Adrenal gland (tissue), 19 donors: ENCODE measurements at regions of chr20 and their contacts with region 1.

Region 1: DNA sequence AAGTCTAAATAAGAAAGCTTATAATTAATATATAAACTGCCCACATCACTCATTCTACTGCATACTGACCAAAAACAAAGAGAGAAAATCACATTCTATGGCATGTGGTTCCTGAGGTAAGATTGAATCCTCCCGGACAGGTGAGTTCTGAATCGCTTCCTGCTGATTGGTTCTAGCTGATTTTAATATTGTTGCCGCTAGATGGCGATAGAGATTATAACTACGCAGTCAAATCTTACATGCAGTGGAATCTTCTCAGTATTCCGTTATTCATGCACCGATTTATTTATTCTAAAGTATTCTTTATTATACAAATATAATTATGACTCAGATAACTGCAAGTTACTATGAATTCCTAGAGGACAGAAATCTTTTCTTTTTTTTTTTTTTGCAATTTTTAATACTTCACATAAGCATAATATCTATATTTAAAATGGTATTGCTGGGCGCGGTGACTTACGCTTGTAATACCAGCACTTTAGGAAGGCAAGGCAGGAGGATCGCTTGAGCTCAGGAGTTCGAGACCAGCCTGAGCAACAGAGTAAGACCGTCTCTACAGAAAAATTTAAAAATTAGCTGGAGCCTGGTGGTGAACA is 24.2 kb upstream of the TMX4 start:
- DNase-seq: peak in 2 of 7 donors; percentile 25 to 34
- H3K4me3 ChIP-seq: no peak overlapping the region
- H3K27ac ChIP-seq: no peak overlapping the region
- H3K4me1 ChIP-seq: no peaks in the 10 kb centered on the region
- H3K27me3 ChIP-seq: no peaks in the 10 kb centered on the region
- CTCF ChIP-seq: peak; percentile 56 to 85 (median 73)
- POLR2A ChIP-seq: no peak

Region 2: DNA sequence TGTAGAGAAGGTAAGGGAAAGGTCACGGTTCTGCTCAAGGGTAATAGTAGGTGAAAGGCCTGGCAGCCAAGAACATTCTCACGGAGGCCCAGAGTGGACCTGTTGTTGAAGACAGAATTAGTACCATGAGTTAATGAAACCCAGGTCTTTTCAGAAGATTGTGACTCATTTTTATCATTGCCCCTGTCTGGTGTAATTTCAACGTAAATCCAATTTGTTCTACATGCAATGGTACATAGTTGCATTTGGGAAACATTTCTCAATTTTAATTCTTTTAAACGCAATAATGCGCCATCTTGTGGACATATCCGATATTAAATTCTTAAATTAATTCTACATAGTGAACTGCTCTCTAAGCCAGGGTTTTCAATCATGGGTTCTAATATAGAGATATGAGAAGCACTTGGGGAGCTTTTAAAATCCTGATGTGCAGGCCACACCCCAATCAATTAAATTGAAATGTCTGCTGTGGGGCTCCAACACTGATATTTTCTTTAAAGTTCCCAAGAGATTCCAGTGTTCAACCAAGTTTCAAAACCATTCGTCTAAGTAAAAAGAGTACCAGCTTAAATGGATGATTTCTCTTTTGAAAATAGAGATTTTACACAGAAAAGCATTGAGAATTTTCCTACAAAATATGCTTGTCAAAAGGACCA is 345.7 kb after region 1 on chr20:
- intact Hi-C with region 1: loop called in 1 of 2 experiments (anchors 5 kb)
- DNase-seq: no peak
- H3K4me3 ChIP-seq: no peak overlapping the region
- H3K27ac ChIP-seq: no peak overlapping the region
- H3K4me1 ChIP-seq: peaks cover 0 to 9% of the 10 kb centered on the region in 2 donors
- H3K27me3 ChIP-seq: no peaks in the 10 kb centered on the region
- CTCF ChIP-seq: peak; percentile 36 to 68 (median 62)
- POLR2A ChIP-seq: no peak